Panc1 (cell line): ENCODE measurements at regions of chr16 and their contacts with region 1.

Region 1: GRCh38 chr16:62321606-62322005 is 285.4 kb upstream of the CDH8 start:
- DNase-seq: no peak
- ATAC-seq: no peak
- H3K4me3 ChIP-seq: no peak overlapping the region
- H3K27ac ChIP-seq: no peak overlapping the region
- H3K4me1 ChIP-seq: no peaks in the 10 kb centered on the region
- H3K27me3 ChIP-seq: no peaks in the 10 kb centered on the region
- CTCF ChIP-seq: no peak

Region 2: DNA sequence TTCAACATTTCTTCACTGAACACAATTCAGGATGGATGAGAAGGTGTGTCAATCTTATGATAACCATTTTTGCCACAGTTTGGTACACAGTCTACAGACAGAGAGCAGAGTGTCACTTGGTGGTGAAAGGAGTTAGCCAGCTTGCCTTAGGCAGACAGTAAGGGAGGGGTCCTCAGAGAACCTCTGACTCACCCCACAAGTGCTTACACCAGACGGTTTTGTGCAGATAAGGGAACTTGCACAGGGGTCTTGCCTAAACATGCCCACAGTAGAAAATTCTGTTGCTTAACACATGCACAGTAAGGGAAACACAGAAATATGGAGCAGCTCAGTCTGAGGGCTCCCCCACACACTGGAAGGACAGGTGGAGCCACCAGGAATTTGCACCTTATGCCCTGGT is 80.9 kb before region 1 on chr16:
- CTCF ChIA-PET with region 1: no interaction called
- POLR2A ChIA-PET with region 1: no interaction called
- in situ Hi-C with region 1: no loop called
- intact Hi-C with region 1: no loop called
- DNase-seq: no peak
- ATAC-seq: no peak
- H3K4me3 ChIP-seq: no peak overlapping the region
- H3K27ac ChIP-seq: no peak overlapping the region
- H3K4me1 ChIP-seq: no peaks in the 10 kb centered on the region
- H3K27me3 ChIP-seq: no peaks in the 10 kb centered on the region
- CTCF ChIP-seq: no peak

Region 3: GRCh38 chr16:62280506-62280905 is 41.1 kb before region 1 on chr16:
- CTCF ChIA-PET with region 1: no interaction called
- POLR2A ChIA-PET with region 1: interaction called, 10 read pairs
- in situ Hi-C with region 1: no loop called
- intact Hi-C with region 1: no loop called
- DNase-seq: no peak
- ATAC-seq: no peak
- H3K4me3 ChIP-seq: no peak overlapping the region
- H3K27ac ChIP-seq: no peak overlapping the region
- H3K4me1 ChIP-seq: no peaks in the 10 kb centered on the region
- H3K27me3 ChIP-seq: no peaks in the 10 kb centered on the region
- CTCF ChIP-seq: no peak